Calu3 (cell line): ENCODE measurements at regions of chr9 and their contacts with region 1.

Region 1: DNA sequence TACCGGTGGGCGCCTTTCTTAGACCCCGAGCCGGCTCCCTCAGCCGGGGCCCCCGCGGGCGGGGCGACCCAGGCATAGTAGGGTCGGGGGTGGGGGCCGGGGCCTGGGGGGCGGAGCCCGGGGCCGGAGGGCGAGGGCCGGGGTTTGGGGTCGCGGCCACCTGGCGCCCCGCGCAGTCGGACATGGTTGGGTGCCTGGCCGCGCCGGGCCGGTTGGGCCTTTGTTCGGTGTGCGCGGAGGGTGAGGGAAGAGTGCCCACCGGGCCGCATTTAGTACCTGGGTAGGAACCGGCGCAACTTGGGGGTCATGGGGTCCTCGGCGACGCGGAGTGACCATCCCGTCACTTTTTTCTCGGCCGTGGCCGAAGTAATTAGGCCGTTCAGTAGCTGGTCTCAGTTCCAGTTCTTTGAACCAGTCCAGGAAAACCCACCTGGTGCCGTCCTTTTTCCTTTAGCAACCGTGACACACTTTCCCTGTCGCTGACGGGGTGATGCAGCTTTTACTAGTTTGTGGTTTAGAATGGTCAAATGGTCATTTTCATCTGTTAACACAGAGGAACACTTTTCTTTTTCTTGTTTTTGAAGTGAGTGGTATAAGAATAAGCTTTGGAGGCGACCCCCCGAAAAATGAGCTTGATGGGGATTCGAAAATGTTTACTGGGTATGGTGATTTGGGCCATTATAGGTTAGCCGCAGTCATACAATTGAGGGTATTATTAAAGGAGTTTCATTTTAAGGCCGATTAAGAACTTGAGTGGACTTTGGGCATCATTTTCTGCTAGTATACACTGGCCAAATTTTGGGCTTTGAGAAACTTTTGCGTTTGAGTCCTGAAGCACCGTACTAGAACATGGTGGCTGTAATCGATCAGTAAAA is 589 bp downstream of the CKS2 start:
- DNase-seq: no peak
- H3K4me3 Mint-ChIP-seq: peak overlapping the region; percentile 81
- H3K27ac Mint-ChIP-seq: peak overlapping the region; percentile 100
- H3K4me1 Mint-ChIP-seq: no peaks in the 10 kb centered on the region
- H3K27me3 Mint-ChIP-seq: no peaks in the 10 kb centered on the region
- CTCF ChIP-seq: no peak

Region 2: DNA sequence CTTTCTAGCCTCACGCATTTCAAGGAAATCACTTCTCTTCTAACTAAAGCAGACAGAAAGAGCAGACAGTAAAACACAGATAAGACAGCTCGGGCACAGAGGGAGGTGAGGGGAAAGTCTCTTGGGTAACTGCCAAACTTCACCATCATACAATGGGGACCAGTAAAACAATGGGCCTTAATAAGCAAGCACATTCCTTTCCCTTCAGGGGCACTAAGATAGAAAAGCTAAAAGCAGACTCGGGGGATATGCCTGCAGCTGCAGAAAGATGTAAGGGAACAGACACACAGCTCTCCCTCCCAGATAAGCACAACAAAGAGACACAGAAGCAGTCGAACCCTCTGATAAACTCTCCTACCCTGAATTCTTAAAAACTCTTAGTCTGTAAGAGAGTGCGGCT is 16.2 kb before region 1 on chr9:
- CTCF ChIA-PET with region 1: interaction called, 11 read pairs
- intact Hi-C with region 1: no loop called
- DNase-seq: no peak
- H3K4me3 Mint-ChIP-seq: no peak overlapping the region
- H3K27ac Mint-ChIP-seq: no peak overlapping the region
- H3K4me1 Mint-ChIP-seq: no peaks in the 10 kb centered on the region
- H3K27me3 Mint-ChIP-seq: no peaks in the 10 kb centered on the region
- CTCF ChIP-seq: no peak